Left colon (tissue), 2 donors: ENCODE measurements at regions of chr1 and their contacts with region 1.

Region 1: GRCh38 chr1:53851571-53852285 is 13.6 kb upstream of the NDC1 start:
- DNase-seq: no peak
- ATAC-seq: no peak

Region 2: DNA sequence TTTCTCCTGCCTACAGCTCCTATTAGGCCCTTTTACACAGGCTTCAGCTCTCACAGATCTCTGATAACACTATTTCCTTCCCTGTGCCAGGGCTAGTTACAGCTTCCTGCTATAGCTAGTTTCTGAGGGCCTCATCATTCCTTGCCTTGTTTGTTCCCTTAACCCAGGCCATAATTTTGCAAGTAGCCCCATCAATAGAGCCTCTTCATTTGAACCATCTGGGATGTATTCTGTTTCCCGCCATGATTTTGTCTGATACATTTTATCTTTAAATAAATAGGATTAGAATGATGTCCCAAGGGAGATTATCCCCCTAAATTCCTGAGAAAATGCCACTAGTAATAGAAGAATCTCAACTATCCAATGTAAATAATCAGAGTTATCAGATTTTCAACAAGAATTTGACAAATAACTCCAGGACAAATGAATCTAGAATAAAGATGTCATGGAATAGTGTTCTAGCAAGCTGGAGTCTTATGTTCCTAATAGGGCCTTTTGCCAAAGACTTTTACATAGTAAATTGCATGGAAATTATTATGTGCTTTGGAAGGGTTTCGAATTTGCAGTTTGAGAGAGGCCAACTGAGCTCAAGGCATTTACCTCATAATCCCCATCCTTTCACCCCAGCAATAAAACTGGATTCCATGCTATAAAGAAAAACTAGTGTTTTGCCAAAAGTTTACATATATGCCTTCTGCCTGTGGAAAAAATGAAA is 77.7 kb after region 1 on chr1:
- intact Hi-C with region 1: no loop called
- DNase-seq: no peak
- ATAC-seq: no peak

Region 3: GRCh38 chr1:54047384-54048305 is 195.9 kb after region 1 on chr1:
- intact Hi-C with region 1: loop called in 1 of 2 experiments (anchors 10 kb)
- DNase-seq: no peak
- ATAC-seq: no peak